Right lobe of liver (tissue), 6 donors: ENCODE measurements at regions of chr7 and their contacts with region 1.

Region 1: DNA sequence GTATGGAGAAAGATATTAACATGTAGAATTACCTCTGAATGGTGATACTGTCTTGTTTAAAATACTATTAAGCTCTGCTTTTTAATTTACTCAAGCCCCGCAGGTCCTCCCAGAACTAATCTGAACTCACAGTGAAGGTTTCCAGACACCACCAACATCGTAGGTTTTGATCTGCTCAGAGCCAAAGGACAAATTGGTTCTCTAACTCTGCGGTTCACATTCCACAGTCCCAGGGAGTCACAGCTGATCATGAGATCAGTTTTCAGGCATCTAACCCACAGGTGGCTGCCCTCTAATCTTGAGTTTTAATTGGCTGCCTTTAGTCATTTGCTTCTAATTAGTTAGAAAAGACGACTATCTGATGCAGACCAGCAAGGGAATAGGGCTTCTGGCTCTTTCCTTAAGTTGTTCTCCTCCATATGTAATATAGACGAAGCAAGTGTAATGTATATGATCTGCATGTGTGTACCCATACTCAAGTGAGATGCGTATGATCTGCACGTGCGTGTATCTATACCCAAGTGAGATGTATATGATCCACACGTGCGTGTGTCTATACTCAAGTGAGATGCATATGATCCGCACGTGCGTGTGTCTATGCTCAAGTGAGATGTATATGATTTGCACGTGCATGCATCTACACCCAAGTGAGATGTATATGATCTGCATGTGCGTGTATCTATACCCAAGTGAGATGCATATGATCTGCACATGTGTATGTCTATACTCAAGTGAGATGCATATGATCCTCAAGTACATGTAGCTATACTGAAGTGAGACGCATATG is 331.5 kb upstream of the NPVF start:
- DNase-seq: no peak
- ATAC-seq: no peak
- H3K4me3 ChIP-seq: no peak overlapping the region
- H3K27ac ChIP-seq: no peak overlapping the region
- H3K4me1 ChIP-seq: no peaks in the 10 kb centered on the region
- H3K27me3 ChIP-seq: no peaks in the 10 kb centered on the region
- CTCF ChIP-seq: no peak
- POLR2A ChIP-seq: no peak

Region 2: DNA sequence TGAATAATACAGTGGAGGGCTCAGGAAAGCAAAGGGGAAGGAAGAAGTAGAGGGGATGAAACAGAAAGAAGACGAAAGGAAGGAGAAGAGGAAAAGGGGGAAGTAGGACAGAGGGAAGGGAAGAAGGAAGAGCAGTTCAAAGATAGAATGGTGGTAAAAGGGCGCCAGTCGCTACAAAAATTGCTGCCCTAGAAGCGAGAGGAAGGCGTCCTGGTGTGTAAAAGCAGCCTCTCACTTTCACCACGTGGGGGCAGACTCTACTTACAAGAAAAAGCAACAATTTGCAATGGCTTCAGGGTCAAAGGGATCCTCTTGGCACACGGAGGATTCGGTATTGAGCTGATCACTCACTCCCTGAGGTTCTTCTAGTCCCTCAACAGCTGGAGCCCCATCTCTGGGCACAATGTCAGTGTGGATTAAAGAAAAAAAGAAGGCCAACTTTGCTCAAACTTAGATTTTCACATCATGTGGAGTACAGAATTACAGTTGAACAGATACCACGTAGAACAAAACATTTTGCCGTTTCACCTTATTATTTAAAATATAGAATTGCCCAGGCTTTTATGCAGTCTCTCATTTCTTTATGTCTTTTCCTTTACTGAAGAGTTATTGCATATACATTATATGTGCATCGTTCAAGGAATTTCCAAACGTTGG is 300.1 kb before region 1 on chr7:
- intact Hi-C with region 1: loop called in 1 of 2 experiments (anchors 5 kb)
- DNase-seq: peak in 2 of 3 donors; percentile 39 to 72
- ATAC-seq: peak; percentile 89 to 98 (median 95)
- H3K4me3 ChIP-seq: no peak overlapping the region
- H3K27ac ChIP-seq: no peak overlapping the region
- H3K4me1 ChIP-seq: no peaks in the 10 kb centered on the region
- H3K27me3 ChIP-seq: no peaks in the 10 kb centered on the region
- CTCF ChIP-seq: peak; percentile 78 to 90 (median 86)
- POLR2A ChIP-seq: no peak

Region 3: DNA sequence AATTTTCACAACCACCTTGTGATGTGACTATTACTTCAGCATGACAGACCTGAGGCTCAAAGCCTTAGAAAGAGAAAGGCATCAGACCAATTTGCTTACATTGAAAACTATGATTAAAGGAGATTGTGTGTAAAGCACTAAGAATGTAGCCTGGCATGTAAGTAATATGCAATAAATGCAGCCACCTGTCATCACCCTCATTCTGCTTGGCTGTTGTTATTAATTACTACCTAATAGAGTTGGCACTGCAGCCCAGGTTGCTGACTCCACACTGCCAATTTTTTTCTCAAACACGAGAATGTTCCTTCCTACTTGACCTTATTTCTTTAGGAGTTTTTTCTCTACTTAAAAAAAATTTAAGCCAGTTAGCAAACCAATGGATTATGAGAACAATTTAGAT is 270.3 kb before region 1 on chr7:
- intact Hi-C with region 1: no loop called
- DNase-seq: no peak
- ATAC-seq: no peak
- H3K4me3 ChIP-seq: no peak overlapping the region
- H3K27ac ChIP-seq: no peak overlapping the region
- H3K4me1 ChIP-seq: no peaks in the 10 kb centered on the region
- H3K27me3 ChIP-seq: no peaks in the 10 kb centered on the region
- CTCF ChIP-seq: no peak
- POLR2A ChIP-seq: no peak

Region 4: GRCh38 chr7:25375805-25376600 is 183.8 kb before region 1 on chr7:
- intact Hi-C with region 1: no loop called
- DNase-seq: no peak
- ATAC-seq: no peak
- H3K4me3 ChIP-seq: no peak overlapping the region
- H3K27ac ChIP-seq: no peak overlapping the region
- H3K4me1 ChIP-seq: no peaks in the 10 kb centered on the region
- H3K27me3 ChIP-seq: no peaks in the 10 kb centered on the region
- CTCF ChIP-seq: no peak
- POLR2A ChIP-seq: no peak

Region 5: GRCh38 chr7:25389489-25390106 is 170.2 kb before region 1 on chr7:
- intact Hi-C with region 1: loop called in 1 of 2 experiments (anchors 5 kb)
- DNase-seq: no peak
- ATAC-seq: peak; percentile 73 to 83 (median 75)
- H3K4me3 ChIP-seq: no peak overlapping the region
- H3K27ac ChIP-seq: no peak overlapping the region
- H3K4me1 ChIP-seq: no peaks in the 10 kb centered on the region
- H3K27me3 ChIP-seq: no peaks in the 10 kb centered on the region
- CTCF ChIP-seq: peak; percentile 52 to 67 (median 58)
- POLR2A ChIP-seq: no peak

Region 6: DNA sequence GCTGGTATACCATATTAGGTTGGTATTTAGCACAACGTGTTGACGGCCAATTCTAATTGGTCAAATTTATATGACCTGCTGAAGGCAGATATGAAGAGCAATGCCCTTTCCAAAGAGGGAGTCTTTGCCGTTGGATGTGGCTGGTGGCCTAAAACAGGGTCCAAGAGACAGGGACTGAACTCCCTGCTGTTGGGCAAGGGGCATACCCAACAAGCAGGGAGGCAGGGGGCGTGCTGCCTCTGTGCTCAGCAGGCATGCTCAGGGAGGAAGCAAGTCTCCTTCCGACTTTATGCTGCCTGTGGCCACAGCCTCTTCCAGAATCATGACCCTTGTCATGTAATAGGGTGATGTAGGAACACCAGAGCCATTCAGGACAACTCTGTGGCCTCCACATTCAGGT is 163.8 kb before region 1 on chr7:
- intact Hi-C with region 1: loop called (anchors 5 kb)
- DNase-seq: no peak
- ATAC-seq: no peak
- H3K4me3 ChIP-seq: no peak overlapping the region
- H3K27ac ChIP-seq: no peak overlapping the region
- H3K4me1 ChIP-seq: no peaks in the 10 kb centered on the region
- H3K27me3 ChIP-seq: no peaks in the 10 kb centered on the region
- CTCF ChIP-seq: no peak
- POLR2A ChIP-seq: no peak

Region 7: GRCh38 chr7:25951031-25951948 is 391.5 kb after region 1 on chr7:
- intact Hi-C with region 1: no loop called
- DNase-seq: peak; percentile 95 to 98 (median 98)
- ATAC-seq: peak; percentile 80 to 88 (median 83)
- H3K4me3 ChIP-seq: peak overlapping the region; percentile 77 to 91 (median 78)
- H3K27ac ChIP-seq: peak overlapping the region; percentile 78 to 93 (median 93)
- H3K4me1 ChIP-seq: peaks cover 0 to 23% (median 0%) of the 10 kb centered on the region in 4 donors
- H3K27me3 ChIP-seq: no peaks in the 10 kb centered on the region
- CTCF ChIP-seq: no peak
- POLR2A ChIP-seq: peak; percentile 95